ENCODE measurements at regions of chr1 and their contacts with region 1.

Region 1: GRCh38 chr1:205591522-205592351 is 40.1 kb downstream of the ELK4 start:
- DNase-seq: peak; percentile 83
- H3K4me3 ChIP-seq: peak overlapping the region in 1 of 3 experiments; percentile 11
- H3K27ac ChIP-seq: no peak overlapping the region
- H3K4me1 ChIP-seq: peaks cover 8% of the 10 kb centered on the region
- H3K27me3 ChIP-seq: no peaks in the 10 kb centered on the region
- CTCF ChIP-seq: peak; percentile 95 to 97
- POLR2A ChIP-seq: no peak

Region 2: GRCh38 chr1:205512059-205513045 is 79.4 kb before region 1 on chr1:
- CTCF ChIA-PET with region 1: no interaction called
- POLR2A ChIA-PET with region 1: no interaction called
- dilution Hi-C with region 1: no loop called
- intact Hi-C with region 1: no loop called
- DNase-seq: no peak
- H3K4me3 ChIP-seq: no peak overlapping the region
- H3K27ac ChIP-seq: no peak overlapping the region
- H3K4me1 ChIP-seq: no peaks in the 10 kb centered on the region
- H3K27me3 ChIP-seq: peaks cover 2% of the 10 kb centered on the region in 2 experiments
- CTCF ChIP-seq: no peak
- POLR2A ChIP-seq: no peak

Region 3: GRCh38 chr1:205536759-205537361 is 54.9 kb before region 1 on chr1:
- CTCF ChIA-PET with region 1: interaction called, 10 read pairs
- POLR2A ChIA-PET with region 1: interaction called, 4 read pairs
- dilution Hi-C with region 1: no loop called
- intact Hi-C with region 1: no loop called
- DNase-seq: no peak
- H3K4me3 ChIP-seq: no peak overlapping the region
- H3K27ac ChIP-seq: no peak overlapping the region
- H3K4me1 ChIP-seq: peaks cover 3% of the 10 kb centered on the region
- H3K27me3 ChIP-seq: no peaks in the 10 kb centered on the region
- CTCF ChIP-seq: no peak
- POLR2A ChIP-seq: no peak

Region 4: DNA sequence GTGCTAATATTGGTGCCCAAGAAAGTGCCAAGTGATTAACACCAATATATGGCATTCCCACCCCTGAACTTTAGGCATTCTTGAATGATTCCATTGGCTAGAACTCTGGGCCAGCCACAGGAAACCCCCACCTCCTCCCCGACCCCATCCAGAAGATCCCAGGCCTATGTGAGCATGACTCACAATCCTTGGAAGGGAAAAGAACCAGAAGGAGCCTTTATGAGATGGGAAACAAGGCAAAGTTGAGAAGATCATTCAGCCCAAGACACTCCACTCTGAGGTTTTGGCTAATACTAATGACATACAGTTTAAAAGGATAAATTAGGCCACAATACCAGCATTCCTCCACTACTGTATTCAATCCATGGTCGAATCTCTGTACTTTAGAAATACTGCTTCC is 18.3 kb after region 1 on chr1:
- CTCF ChIA-PET with region 1: interaction called, 14 read pairs
- POLR2A ChIA-PET with region 1: no interaction called
- dilution Hi-C with region 1: no loop called
- intact Hi-C with region 1: no loop called
- DNase-seq: peak; percentile 87
- H3K4me3 ChIP-seq: no peak overlapping the region
- H3K27ac ChIP-seq: peak overlapping the region; percentile 29
- H3K4me1 ChIP-seq: peaks cover 30% of the 10 kb centered on the region
- H3K27me3 ChIP-seq: no peaks in the 10 kb centered on the region
- CTCF ChIP-seq: no peak
- POLR2A ChIP-seq: no peak

Region 5: DNA sequence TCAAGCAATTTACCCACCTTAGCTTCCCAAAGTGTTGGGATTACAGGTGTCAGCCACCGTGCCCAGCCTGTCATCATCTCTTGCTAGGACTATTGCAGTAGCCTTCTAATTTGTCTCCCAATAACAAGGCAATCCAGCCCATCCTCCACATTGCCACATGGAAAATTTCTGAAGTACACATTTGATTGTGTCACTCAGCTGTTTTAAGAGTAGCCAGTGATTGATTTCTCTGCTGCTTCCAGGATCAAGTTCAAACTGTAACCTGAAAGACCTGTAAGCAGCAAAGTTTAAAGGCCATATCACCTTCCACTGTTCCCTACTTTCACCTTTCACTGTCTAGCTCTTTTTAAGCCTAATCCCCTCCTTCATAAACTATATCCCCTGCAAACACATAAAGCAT is 47.8 kb after region 1 on chr1:
- CTCF ChIA-PET with region 1: interaction called, 21 read pairs
- POLR2A ChIA-PET with region 1: interaction called, 3 read pairs
- dilution Hi-C with region 1: no loop called
- intact Hi-C with region 1: no loop called
- DNase-seq: no peak
- H3K4me3 ChIP-seq: no peak overlapping the region
- H3K27ac ChIP-seq: no peak overlapping the region
- H3K4me1 ChIP-seq: no peaks in the 10 kb centered on the region
- H3K27me3 ChIP-seq: no peaks in the 10 kb centered on the region
- CTCF ChIP-seq: no peak
- POLR2A ChIP-seq: no peak

Region 6: DNA sequence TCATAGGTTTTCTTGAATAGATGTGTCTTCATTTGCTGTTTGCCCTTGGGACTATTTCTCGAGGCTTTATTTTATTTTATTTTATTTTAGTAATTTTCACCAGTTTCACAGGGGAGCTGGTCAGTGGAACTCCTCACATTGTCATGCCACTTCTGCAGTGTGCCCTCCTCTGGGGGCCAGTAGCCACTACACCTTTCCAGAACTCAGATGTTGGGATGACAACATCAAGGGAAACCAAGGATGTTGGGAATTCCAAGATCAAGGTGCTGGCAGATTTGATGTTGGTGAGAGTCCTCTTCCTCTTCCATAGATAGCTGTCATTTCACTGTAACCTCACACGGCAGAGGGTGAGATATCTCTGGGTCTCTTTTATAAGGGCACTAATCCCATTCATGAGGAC is 316.1 kb after region 1 on chr1:
- CTCF ChIA-PET with region 1: interaction called, 10 read pairs
- POLR2A ChIA-PET with region 1: no interaction called
- dilution Hi-C with region 1: no loop called
- intact Hi-C with region 1: loop called (anchors 10 kb)
- DNase-seq: peak; percentile 46
- H3K4me3 ChIP-seq: no peak overlapping the region
- H3K27ac ChIP-seq: no peak overlapping the region
- H3K4me1 ChIP-seq: no peaks in the 10 kb centered on the region
- H3K27me3 ChIP-seq: peaks cover 5 to 9% of the 10 kb centered on the region in 2 experiments
- CTCF ChIP-seq: peak; percentile 65 to 75
- POLR2A ChIP-seq: no peak